ENCODE measurements at regions of chr10 and their contacts with region 1.

Region 1: GRCh38 chr10:77641788-77642397 is 4.3 kb upstream of the KCNMA1 start:
- DNase-seq: peak; percentile 64
- ATAC-seq: no peak

Region 2: GRCh38 chr10:77173615-77174461 is 468.1 kb before region 1 on chr10:
- intact Hi-C with region 1: loop called (anchors 2 to 5 kb)
- DNase-seq: peak; percentile 68
- ATAC-seq: peak; percentile 75 to 77

Region 3: GRCh38 chr10:77179015-77179695 is 462.7 kb before region 1 on chr10:
- intact Hi-C with region 1: loop called (anchors 2 to 5 kb)
- DNase-seq: peak; percentile 63
- ATAC-seq: peak in 1 of 2 donors; percentile 89

Region 4: GRCh38 chr10:77391605-77392235 is 250.2 kb before region 1 on chr10:
- intact Hi-C with region 1: loop called (anchors 2 to 5 kb)
- DNase-seq: peak; percentile 75
- ATAC-seq: peak; percentile 67 to 71

Region 5: GRCh38 chr10:77494327-77494726 is 147.6 kb before region 1 on chr10:
- intact Hi-C with region 1: loop called in 1 of 2 experiments (anchors 10 kb)
- DNase-seq: no peak
- ATAC-seq: peak in 1 of 2 donors; percentile 65

Region 6: DNA sequence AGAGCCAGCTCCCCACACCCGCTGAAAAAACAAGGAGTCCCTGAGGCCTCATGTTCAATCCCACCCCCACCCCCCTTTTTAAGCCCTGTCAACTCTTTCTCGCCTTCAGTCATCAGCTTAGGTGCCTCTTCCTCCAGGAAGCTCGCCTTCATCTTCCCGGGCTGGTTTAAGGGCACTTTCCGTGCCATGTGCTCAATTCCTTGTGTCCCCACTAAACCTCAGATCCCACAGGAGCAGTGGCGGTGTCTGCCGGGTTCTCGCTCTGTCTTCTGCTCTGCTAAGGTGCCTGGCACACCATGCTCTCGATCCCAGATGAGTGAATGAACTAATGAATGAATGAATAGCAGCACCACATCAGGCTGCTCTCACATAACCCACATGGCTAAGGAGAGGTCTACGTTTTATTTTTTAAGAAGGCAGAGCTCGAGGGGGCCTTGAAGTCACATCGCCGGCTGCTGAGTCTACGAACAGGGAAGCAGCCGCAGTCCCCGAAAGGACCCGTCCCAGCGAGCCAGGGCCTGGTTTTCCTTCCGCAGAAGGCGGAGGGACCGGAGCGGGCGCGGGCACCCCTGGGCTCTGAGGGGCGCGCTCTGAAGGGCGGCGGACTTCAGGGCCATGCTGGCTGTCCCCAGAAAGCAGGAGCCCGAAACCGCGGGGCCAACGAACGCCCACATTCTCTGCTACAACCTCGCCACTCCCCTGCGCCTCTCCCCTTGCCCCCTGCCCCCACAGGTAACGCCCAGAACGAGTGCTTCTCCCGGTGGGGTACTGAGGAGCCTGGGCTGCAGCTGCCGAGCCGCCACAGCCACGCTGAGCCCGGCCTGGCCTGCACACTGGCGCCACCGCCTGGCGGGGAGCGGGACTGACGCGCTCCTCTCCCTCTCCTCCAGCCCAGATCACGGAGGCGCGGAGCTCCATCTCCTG is 69.1 kb after region 1 on chr10:
- intact Hi-C with region 1: no loop called
- DNase-seq: peak; percentile 76
- ATAC-seq: peak; percentile 93 to 98